ENCODE measurements at regions of chr10 and their contacts with region 1.

Region 1: GRCh38 chr10:27661514-27662286 is 83.9 kb downstream of the MKX start:
- DNase-seq: no peak
- H3K4me3 Mint-ChIP-seq: no peak overlapping the region
- H3K27ac Mint-ChIP-seq: peak overlapping the region; percentile 27
- H3K4me1 Mint-ChIP-seq: no peaks in the 10 kb centered on the region
- H3K27me3 Mint-ChIP-seq: peaks cover 33% of the 10 kb centered on the region
- CTCF ChIP-seq: no peak

Region 2: GRCh38 chr10:27369880-27370279 is 291.8 kb before region 1 on chr10:
- CTCF ChIA-PET with region 1: no interaction called
- intact Hi-C with region 1: loop called (anchors 5 kb)
- DNase-seq: no peak
- H3K4me3 Mint-ChIP-seq: no peak overlapping the region
- H3K27ac Mint-ChIP-seq: no peak overlapping the region
- H3K4me1 Mint-ChIP-seq: peaks cover 9% of the 10 kb centered on the region
- H3K27me3 Mint-ChIP-seq: no peaks in the 10 kb centered on the region
- CTCF ChIP-seq: peak; percentile 17

Region 3: DNA sequence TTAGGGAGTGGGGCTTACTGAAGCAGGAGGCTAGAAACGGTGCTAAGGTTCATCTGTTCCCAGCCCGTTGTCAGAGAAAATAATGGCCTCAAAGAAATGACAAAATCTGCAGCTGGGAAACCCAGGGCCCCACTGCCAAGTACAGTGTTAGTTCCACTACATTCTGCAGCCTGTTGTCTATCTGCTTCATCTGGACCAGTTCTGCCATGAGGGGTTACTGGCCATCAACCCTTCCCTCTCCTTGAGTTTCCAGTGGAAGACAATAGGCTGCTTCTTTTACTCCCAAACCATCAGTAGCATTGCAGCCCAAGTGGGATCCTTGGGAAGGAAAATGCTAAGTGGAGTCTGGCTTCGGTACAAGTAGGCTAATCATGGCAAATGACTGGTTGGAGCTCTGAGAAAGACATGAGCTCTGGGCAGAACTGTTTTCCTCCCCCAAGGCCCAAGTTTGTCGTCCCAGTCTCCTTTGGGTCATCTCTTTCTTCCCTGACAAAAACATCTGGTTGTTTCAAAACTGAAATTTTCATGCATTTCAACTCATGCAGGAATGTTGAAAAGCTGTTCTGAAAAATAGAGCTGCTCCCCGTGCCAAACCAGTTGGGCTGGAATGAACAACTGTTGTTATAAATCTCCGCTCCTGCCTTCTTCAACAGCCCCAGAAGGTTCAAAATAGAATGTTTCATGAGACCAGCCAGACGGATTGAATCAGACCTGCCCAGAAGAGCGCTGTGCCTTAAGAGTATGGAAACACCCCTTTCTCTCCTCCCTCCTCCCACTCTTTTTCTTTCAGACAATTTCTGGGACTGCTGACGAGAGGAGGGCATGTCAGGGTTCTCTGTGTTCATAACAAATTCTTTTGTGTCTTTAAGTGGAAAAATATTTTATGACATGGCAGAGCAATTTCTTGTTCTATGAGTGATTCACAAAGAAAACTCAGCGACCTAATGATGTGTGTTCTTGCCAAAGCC is 41.0 kb before region 1 on chr10:
- CTCF ChIA-PET with region 1: no interaction called
- intact Hi-C with region 1: no loop called
- DNase-seq: no peak
- H3K4me3 Mint-ChIP-seq: no peak overlapping the region
- H3K27ac Mint-ChIP-seq: no peak overlapping the region
- H3K4me1 Mint-ChIP-seq: no peaks in the 10 kb centered on the region
- H3K27me3 Mint-ChIP-seq: peaks cover 73% of the 10 kb centered on the region
- CTCF ChIP-seq: no peak